ENCODE measurements at regions of chr7 and their contacts with region 1.

Region 1: GRCh38 chr7:876167-876967 is at the start of gene GET4:
- DNase-seq: peak; percentile 97 to 100 (median 99)
- ATAC-seq: peak; percentile 90
- H3K4me3 ChIP-seq: peak within 1 kb of the TSS; percentile 65
- H3K4me3 Mint-ChIP-seq: peak within 1 kb of the TSS; percentile 79 to 98 (median 90)
- H3K27ac ChIP-seq: peak within 1 kb of the TSS; percentile 95
- H3K27ac Mint-ChIP-seq: peak within 1 kb of the TSS; percentile 57 to 94 (median 90)
- H3K4me1 ChIP-seq: peaks cover 14 to 33% of the 10 kb centered on the region in 2 donors
- H3K4me1 Mint-ChIP-seq: peaks cover 11 to 42% (median 31%) of the 10 kb centered on the region in 7 donors
- H3K27me3 ChIP-seq: no peaks in the 10 kb centered on the region
- H3K27me3 Mint-ChIP-seq: no peaks in the 10 kb centered on the region
- total RNA-seq, gene GET4: 42.6 to 82.1 (median 52.6) TPM

Region 2: DNA sequence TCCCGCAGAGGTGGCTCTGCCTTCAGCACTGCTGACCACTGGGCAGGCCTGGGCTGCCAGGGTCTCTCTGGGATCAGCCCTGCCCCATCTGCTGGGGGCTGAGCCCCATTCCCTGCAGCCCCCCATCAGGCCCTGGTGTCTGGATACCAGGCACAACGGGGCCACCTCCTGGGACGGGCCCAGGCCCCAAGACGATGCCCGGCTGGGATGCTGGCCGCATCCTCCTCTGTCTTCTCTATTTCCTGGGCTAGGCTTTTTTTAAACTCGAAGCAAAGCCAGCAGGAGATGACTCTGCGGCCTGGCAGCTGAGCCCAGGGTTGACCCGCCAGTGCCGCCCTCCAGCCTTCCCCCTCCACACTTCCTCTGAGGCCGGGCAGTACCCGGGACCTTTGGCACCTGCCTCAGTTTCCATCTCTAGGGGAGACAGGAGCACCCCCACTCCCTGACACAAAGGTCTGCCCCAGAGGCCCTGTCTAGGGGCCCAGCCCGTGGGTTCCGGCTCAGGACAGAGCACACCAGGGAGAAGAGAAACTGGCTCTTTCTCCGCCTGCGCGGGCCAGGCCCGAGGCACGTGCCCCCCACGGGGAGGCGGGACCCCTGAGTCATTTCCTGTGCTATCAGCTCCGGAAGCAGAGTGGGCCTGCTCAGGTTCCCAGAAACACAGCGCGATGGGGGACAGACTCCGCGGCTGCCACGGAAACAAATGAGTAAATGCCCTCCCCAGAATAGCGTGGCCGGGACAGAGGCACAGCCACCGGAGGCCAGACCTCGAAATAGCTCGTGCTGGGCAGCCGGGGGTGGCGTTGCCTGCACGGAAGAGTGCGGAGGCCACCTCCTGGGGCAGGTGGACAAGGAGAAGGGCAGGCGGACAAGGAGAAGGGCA is 272.1 kb before region 1 on chr7:
- CTCF ChIA-PET with region 1: no interaction called
- POLR2A ChIA-PET with region 1: no interaction called
- intact Hi-C with region 1: loop called (anchors 5 to 10 kb)
- DNase-seq: peak; percentile 74 to 91 (median 87)
- ATAC-seq: peak; percentile 89
- H3K4me3 ChIP-seq: peak overlapping the region; percentile 26
- H3K4me3 Mint-ChIP-seq: peak overlapping the region; percentile 77 to 98 (median 88)
- H3K27ac ChIP-seq: peak overlapping the region; percentile 86
- H3K27ac Mint-ChIP-seq: peak overlapping the region; percentile 93 to 100 (median 99)
- H3K4me1 ChIP-seq: peaks cover 48 to 56% of the 10 kb centered on the region in 2 donors
- H3K4me1 Mint-ChIP-seq: peaks cover 37 to 72% (median 49%) of the 10 kb centered on the region in 7 donors
- H3K27me3 ChIP-seq: no peaks in the 10 kb centered on the region
- H3K27me3 Mint-ChIP-seq: no peaks in the 10 kb centered on the region

Region 3: DNA sequence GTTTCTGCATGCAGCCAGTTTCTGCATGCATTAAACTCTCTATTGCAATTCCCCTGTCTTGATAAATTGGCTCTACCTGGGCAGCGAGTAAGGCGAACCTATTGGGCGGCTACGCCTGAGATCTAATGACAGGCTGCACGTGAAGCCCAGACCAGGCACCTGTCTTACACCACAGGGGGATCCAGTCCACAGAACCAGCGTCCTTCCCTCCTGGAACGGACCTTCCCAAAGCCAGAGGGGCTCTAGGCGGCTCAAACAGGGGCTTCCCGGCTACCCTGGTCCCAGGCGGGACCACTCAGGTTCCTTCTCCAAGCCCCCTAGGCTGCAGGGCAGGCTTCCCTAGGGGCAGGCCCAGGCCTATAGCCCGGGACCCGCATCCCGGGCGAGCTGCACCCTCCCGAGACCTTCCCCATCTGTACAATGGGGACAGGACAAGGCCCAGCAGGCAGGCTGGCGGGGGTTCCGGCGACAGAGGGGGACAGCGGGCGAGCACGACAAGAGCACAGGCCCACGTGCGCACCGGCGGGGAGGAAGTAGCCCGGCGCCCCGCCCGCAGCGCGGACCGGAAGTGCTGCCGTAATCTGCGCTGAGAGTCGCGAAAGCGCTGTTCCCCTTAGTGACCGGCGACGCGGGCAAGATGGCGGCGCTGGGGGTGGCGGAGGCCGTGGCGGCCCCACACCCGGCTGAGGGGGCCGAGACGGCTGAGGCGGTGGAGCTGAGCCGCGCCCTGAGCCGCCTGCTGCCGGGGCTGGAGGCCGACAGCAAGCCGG is 150.1 kb before region 1 on chr7 and contains the start of gene DNAAF5:
- CTCF ChIA-PET with region 1: no interaction called
- POLR2A ChIA-PET with region 1: no interaction called
- intact Hi-C with region 1: loop called (anchors 1 to 2 kb)
- DNase-seq: peak; percentile 73 to 90 (median 84)
- ATAC-seq: peak; percentile 97
- H3K4me3 ChIP-seq: peak within 1 kb of the TSS; percentile 81
- H3K4me3 Mint-ChIP-seq: peak within 1 kb of the TSS; percentile 72 to 88 (median 84)
- H3K27ac ChIP-seq: peak within 1 kb of the TSS; percentile 73
- H3K27ac Mint-ChIP-seq: peak within 1 kb of the TSS in 8 of 9 donors; percentile 57 to 83 (median 71)
- H3K4me1 ChIP-seq: peaks cover 14 to 15% of the 10 kb centered on the region in 2 donors
- H3K4me1 Mint-ChIP-seq: peaks cover 20 to 37% (median 21%) of the 10 kb centered on the region in 7 donors
- H3K27me3 ChIP-seq: no peaks in the 10 kb centered on the region
- H3K27me3 Mint-ChIP-seq: no peaks in the 10 kb centered on the region
- total RNA-seq, gene DNAAF5: 12.5 to 25.7 (median 14.6) TPM

Region 4: DNA sequence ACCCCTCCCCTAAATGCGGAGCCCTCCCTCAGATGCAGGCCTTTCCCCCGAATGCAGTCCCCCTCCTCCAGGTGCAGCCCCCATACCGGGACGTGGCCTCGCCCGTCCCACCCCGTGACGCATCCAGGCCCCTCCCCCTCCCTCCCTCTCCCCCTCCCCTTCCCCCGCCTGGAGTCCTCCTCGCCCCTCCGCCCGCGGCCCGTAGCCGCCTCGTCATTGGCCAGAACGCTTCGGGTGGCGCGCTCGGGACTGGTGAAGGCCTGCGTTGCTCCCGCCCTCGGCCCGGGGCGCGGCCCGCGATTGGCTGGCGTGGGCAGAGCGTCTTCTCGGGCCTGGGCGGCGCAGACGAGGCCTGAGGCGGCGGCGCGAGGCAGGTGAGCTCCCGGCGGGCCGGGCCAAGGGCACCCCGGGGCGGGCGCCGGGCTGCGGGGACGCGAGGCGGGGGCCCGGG is 60.0 kb before region 1 on chr7:
- CTCF ChIA-PET with region 1: interaction called, 4 read pairs
- POLR2A ChIA-PET with region 1: interaction called, 19 read pairs
- intact Hi-C with region 1: loop called (anchors 1 kb)
- DNase-seq: peak; percentile 95 to 98 (median 97)
- ATAC-seq: peak; percentile 98
- H3K4me3 ChIP-seq: peak overlapping the region; percentile 52
- H3K4me3 Mint-ChIP-seq: peak overlapping the region; percentile 60 to 98 (median 88)
- H3K27ac ChIP-seq: peak overlapping the region; percentile 59
- H3K27ac Mint-ChIP-seq: peak overlapping the region in 3 of 9 donors; percentile 9 to 85 (median 65)
- H3K4me1 ChIP-seq: peaks cover 27 to 32% of the 10 kb centered on the region in 2 donors
- H3K4me1 Mint-ChIP-seq: peaks cover 45 to 72% (median 61%) of the 10 kb centered on the region in 7 donors
- H3K27me3 ChIP-seq: no peaks in the 10 kb centered on the region
- H3K27me3 Mint-ChIP-seq: peaks cover 0 to 42% (median 0%) of the 10 kb centered on the region in 5 donors

Region 5: DNA sequence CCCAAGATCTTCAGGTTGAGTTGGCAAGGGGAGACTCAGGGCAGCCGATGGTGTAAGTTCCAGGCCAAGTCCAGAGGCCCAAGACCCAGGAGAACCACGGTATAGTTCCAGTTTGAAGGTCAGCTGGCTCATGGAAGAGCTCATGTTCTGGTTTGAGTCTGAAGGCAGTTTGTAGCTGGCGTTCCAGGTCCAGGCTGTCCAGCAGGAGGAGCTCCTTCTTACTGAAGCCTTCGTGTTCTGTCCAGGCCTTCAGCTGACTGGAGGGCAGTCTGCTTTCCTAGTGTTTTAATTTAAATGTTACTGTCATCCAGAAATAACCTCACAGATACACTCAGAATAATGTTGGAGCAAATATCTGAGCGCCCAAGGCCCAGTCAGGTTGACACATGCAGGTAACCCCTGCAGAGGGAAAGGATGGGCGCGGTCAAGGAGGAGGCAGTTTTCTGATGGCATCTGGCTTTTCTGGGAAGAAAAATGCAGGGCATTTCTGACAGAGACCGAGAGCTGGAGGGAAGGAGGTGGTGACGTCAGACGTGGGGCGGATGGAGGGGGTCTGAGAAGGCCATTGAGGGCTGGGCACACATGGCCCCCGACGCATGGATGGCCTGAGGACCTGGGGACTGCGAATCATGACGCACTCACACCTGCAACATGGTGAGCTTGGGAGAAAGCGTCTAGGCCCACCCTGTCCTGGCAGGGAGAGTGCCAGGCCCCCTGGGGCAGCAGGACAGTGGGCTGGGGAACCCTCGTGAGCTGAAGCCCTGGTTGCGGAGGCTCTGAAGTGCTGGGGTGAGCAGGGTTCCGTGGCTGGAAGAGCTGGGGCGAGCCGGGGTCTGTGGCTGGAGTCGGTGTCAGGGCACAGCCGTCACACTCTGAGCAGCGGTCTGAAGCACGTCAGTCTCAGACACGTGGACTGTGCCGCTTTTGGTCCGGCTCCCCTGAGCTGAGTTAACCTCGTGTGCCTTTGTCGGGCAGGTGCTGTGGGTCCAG is 39.7 kb before region 1 on chr7:
- CTCF ChIA-PET with region 1: interaction called, 10 read pairs
- POLR2A ChIA-PET with region 1: no interaction called
- intact Hi-C with region 1: loop called (anchors 1 kb)
- DNase-seq: no peak
- ATAC-seq: no peak
- H3K4me3 ChIP-seq: no peak overlapping the region
- H3K4me3 Mint-ChIP-seq: peak overlapping the region in 1 of 10 donors; percentile 72
- H3K27ac ChIP-seq: no peak overlapping the region
- H3K27ac Mint-ChIP-seq: peak overlapping the region in 8 of 9 donors; percentile 15 to 97 (median 70)
- H3K4me1 ChIP-seq: peaks cover 12 to 20% of the 10 kb centered on the region in 2 donors
- H3K4me1 Mint-ChIP-seq: peaks cover 18 to 39% (median 31%) of the 10 kb centered on the region in 7 donors
- H3K27me3 ChIP-seq: no peaks in the 10 kb centered on the region
- H3K27me3 Mint-ChIP-seq: no peaks in the 10 kb centered on the region

Region 6: GRCh38 chr7:894164-894867 is 17.9 kb after region 1 on chr7:
- CTCF ChIA-PET with region 1: no interaction called
- POLR2A ChIA-PET with region 1: no interaction called
- intact Hi-C with region 1: no loop called
- DNase-seq: no peak
- ATAC-seq: peak; percentile 9
- H3K4me3 ChIP-seq: no peak overlapping the region
- H3K4me3 Mint-ChIP-seq: no peak overlapping the region
- H3K27ac ChIP-seq: no peak overlapping the region
- H3K27ac Mint-ChIP-seq: no peak overlapping the region
- H3K4me1 ChIP-seq: no peaks in the 10 kb centered on the region
- H3K4me1 Mint-ChIP-seq: peaks cover 0 to 8% (median 0%) of the 10 kb centered on the region in 7 donors
- H3K27me3 ChIP-seq: no peaks in the 10 kb centered on the region
- H3K27me3 Mint-ChIP-seq: no peaks in the 10 kb centered on the region

Region 7: GRCh38 chr7:1044191-1045068 is 168.1 kb after region 1 on chr7 and contains the start of gene GPR146:
- CTCF ChIA-PET with region 1: no interaction called
- POLR2A ChIA-PET with region 1: interaction called, 5 read pairs
- intact Hi-C with region 1: loop called in 1 of 2 experiments (anchors 2 kb)
- DNase-seq: peak; percentile 73 to 97 (median 86)
- ATAC-seq: peak; percentile 96
- H3K4me3 ChIP-seq: peak within 1 kb of the TSS; percentile 79
- H3K4me3 Mint-ChIP-seq: peak within 1 kb of the TSS; percentile 88 to 94 (median 91)
- H3K27ac ChIP-seq: peak within 1 kb of the TSS; percentile 83
- H3K27ac Mint-ChIP-seq: peak within 1 kb of the TSS; percentile 62 to 93 (median 85)
- H3K4me1 ChIP-seq: peaks cover 49 to 54% of the 10 kb centered on the region in 2 donors
- H3K4me1 Mint-ChIP-seq: peaks cover 42 to 75% (median 56%) of the 10 kb centered on the region in 7 donors
- H3K27me3 ChIP-seq: no peaks in the 10 kb centered on the region
- H3K27me3 Mint-ChIP-seq: peaks cover 0 to 13% (median 0%) of the 10 kb centered on the region in 5 donors
- total RNA-seq, gene GPR146: 10.1 to 26.5 (median 15.9) TPM

Region 8: GRCh38 chr7:1159891-1160668 is 283.7 kb after region 1 on chr7 and contains the start of gene ZFAND2A:
- CTCF ChIA-PET with region 1: no interaction called
- POLR2A ChIA-PET with region 1: no interaction called
- intact Hi-C with region 1: loop called in 1 of 2 experiments (anchors 1 kb)
- DNase-seq: peak; percentile 96 to 99 (median 98)
- ATAC-seq: peak; percentile 99
- H3K4me3 ChIP-seq: peak within 1 kb of the TSS; percentile 97
- H3K4me3 Mint-ChIP-seq: peak within 1 kb of the TSS; percentile 72 to 94 (median 88)
- H3K27ac ChIP-seq: peak within 1 kb of the TSS; percentile 96
- H3K27ac Mint-ChIP-seq: peak within 1 kb of the TSS; percentile 74 to 95 (median 90)
- H3K4me1 ChIP-seq: peaks cover 13 to 18% of the 10 kb centered on the region in 2 donors
- H3K4me1 Mint-ChIP-seq: peaks cover 9 to 35% (median 28%) of the 10 kb centered on the region in 7 donors
- H3K27me3 ChIP-seq: no peaks in the 10 kb centered on the region
- H3K27me3 Mint-ChIP-seq: no peaks in the 10 kb centered on the region
- total RNA-seq, gene ZFAND2A: 21.2 to 74.5 (median 38.6) TPM

Measured in naive thymus-derived CD4-positive, alpha-beta T cell (primary cell).